GM12878 (cell line): ENCODE measurements at regions of chr3 and their contacts with region 1.

Region 1: DNA sequence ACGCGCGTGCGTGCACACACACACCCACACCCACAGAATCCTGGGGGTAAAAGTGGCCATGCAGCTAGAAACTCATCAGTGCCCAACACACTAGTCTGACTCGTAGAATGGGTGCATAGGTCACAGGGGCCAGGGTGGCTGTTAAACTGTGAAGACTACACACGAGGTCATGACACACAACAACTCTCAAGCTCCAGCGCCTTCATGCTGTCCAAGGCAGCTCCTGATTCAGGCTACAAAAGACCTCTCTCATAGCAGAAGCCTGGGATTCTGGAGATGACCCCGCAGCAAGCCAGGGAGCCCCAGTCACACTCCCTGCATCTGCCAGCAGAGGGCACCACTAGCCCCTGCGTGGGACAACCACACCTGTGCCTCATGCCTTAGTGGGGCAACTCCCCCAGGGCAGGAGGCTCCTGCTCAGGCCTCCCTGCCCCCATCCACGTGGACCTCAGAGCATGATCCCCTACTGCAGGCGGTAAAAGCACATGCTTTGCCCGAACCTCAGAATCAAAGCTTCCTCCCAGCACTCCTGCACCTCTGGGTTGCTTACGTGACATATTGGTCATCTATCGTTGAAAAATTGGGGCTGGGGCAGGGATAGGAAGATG is 93.1 kb downstream of the LRIG1 start:
- DNase-seq: no peak
- ATAC-seq: peak; percentile 98
- H3K4me3 ChIP-seq: no peak overlapping the region
- H3K27ac ChIP-seq: no peak overlapping the region
- H3K4me1 ChIP-seq: no peaks in the 10 kb centered on the region
- H3K27me3 ChIP-seq: no peaks in the 10 kb centered on the region
- CTCF ChIP-seq: peak; percentile 85 to 96 (median 93)
- EP300 ChIP-seq: no peak
- POLR2A ChIP-seq: no peak
- RAD21 ChIP-seq: peak; percentile 94

Region 2: DNA sequence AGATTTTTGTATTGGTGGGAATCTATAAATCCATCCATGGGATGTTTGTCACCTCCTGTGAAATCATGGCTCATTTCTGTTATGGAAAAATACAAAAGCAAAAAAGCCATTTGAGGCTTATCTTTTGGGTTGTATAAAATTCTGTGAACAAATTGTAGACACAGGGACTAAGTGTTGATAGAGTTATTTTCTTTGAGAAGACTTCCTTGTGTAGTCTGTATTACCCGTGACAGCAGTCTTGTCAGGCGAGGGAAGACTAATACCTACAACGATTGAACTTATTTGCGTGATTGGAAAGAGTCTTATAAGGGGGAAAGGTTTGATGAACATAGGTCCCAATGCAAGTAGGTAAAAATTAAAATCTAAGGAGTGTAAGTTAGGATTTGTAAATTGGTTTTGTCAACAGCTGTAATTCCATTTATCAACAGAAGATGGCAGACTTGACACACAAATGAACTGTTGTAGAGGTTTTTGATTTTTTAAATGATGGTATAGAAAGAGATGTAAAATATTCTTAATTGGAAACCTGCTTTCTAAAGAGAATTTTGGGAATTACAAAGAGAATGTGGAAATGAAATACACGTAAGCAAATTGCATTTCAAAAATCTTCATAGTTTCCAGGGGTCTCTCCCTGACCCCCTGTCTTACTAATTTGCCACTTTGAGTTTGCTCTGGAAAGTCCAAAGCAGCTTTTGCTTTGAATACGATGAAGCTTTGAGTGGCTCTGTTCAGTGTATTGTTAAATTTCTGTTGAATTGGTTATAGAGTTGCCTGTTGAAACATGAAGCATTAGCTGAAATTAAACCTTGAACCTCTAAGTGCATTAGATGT is 153.7 kb before region 1 on chr3:
- CTCF ChIA-PET with region 1: interaction called, 30 read pairs
- POLR2A ChIA-PET with region 1: no interaction called
- RAD21 ChIA-PET with region 1: interaction called, 4 read pairs
- SMC1A ChIA-PET with region 1: interaction called, 12 read pairs
- in situ Hi-C with region 1: no loop called
- intact Hi-C with region 1: no loop called
- DNase-seq: no peak
- ATAC-seq: peak; percentile 62
- H3K4me3 ChIP-seq: no peak overlapping the region
- H3K27ac ChIP-seq: no peak overlapping the region
- H3K4me1 ChIP-seq: no peaks in the 10 kb centered on the region
- H3K27me3 ChIP-seq: no peaks in the 10 kb centered on the region
- CTCF ChIP-seq: peak; percentile 44 to 62 (median 55); a peak in 4 of 6 replicates
- EP300 ChIP-seq: no peak
- POLR2A ChIP-seq: no peak
- RAD21 ChIP-seq: peak; percentile 66

Region 3: GRCh38 chr3:66378256-66378823 is 29.4 kb before region 1 on chr3:
- CTCF ChIA-PET with region 1: interaction called, 14 read pairs
- POLR2A ChIA-PET with region 1: no interaction called
- RAD21 ChIA-PET with region 1: interaction called, 3 read pairs
- SMC1A ChIA-PET with region 1: interaction called, 5 read pairs
- in situ Hi-C with region 1: no loop called
- intact Hi-C with region 1: no loop called
- DNase-seq: no peak
- ATAC-seq: peak; percentile 61
- H3K4me3 ChIP-seq: no peak overlapping the region
- H3K27ac ChIP-seq: no peak overlapping the region
- H3K4me1 ChIP-seq: no peaks in the 10 kb centered on the region
- H3K27me3 ChIP-seq: no peaks in the 10 kb centered on the region
- CTCF ChIP-seq: peak; percentile 40 to 67 (median 63)
- EP300 ChIP-seq: no peak
- POLR2A ChIP-seq: no peak
- RAD21 ChIP-seq: peak; percentile 40

Region 4: GRCh38 chr3:66490214-66490613 is 82.5 kb after region 1 on chr3:
- CTCF ChIA-PET with region 1: interaction called, 10 read pairs
- POLR2A ChIA-PET with region 1: no interaction called
- RAD21 ChIA-PET with region 1: no interaction called
- SMC1A ChIA-PET with region 1: no interaction called
- in situ Hi-C with region 1: no loop called
- intact Hi-C with region 1: no loop called
- DNase-seq: no peak
- ATAC-seq: peak; percentile 37
- H3K4me3 ChIP-seq: no peak overlapping the region
- H3K27ac ChIP-seq: no peak overlapping the region
- H3K4me1 ChIP-seq: peaks cover 19% of the 10 kb centered on the region
- H3K27me3 ChIP-seq: no peaks in the 10 kb centered on the region
- CTCF ChIP-seq: no peak
- EP300 ChIP-seq: no peak
- POLR2A ChIP-seq: no peak
- RAD21 ChIP-seq: no peak

Region 5: DNA sequence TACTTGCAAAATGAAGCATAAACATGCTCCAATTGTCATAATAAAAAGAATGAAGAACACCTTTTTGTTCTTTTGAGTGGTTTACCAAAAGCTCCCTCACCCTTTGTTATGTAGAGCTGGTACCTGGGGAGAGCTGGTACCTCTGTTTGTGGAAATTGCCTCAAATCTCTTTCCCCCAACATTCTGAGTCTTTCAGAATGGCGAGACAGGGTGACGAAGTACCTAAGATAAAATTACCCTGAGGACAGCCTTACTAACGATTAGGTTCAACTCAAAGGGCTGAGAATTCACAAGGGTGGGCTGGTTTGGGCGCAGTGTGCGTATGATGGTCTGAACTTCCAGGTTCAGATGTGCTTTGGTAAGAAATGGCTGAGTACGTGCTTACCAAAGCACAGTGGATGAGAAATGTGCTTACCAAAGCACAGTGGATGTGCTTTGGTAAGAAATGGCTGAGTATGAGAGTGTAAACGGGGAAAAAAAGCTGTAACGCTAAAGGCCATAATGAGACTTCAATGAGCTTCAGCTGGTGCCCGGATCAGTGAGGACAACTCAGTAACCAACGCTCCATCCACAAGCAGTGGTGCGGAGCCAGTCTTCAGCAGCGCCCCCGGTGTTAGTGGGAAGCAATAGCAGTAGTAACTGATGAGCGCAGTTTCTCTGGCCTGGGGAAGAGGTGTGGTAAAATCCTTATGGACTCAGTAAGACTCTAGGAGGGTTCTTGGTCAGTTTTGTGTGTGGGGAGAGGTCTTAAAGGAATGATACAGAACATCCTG is 165.4 kb after region 1 on chr3:
- CTCF ChIA-PET with region 1: no interaction called
- POLR2A ChIA-PET with region 1: no interaction called
- RAD21 ChIA-PET with region 1: no interaction called
- SMC1A ChIA-PET with region 1: no interaction called
- in situ Hi-C with region 1: no loop called
- intact Hi-C with region 1: no loop called
- DNase-seq: no peak
- ATAC-seq: peak; percentile 57; the same call in 2 of the 3 replicates
- H3K4me3 ChIP-seq: no peak overlapping the region
- H3K27ac ChIP-seq: no peak overlapping the region
- H3K4me1 ChIP-seq: no peaks in the 10 kb centered on the region
- H3K27me3 ChIP-seq: peaks cover 0 to 3% of the 10 kb centered on the region in 2 experiments; a peak in 2 of 4 replicates
- CTCF ChIP-seq: peak; percentile 15 to 60 (median 40); a peak in 4 of 6 replicates
- EP300 ChIP-seq: no peak
- POLR2A ChIP-seq: no peak
- RAD21 ChIP-seq: 0 out of 2 replicates have a peak, but pooled peaks have one; percentile 21

Region 6: GRCh38 chr3:66816090-66816761 is 408.5 kb after region 1 on chr3:
- CTCF ChIA-PET with region 1: interaction called, 149 read pairs
- POLR2A ChIA-PET with region 1: no interaction called
- RAD21 ChIA-PET with region 1: interaction called, 23 read pairs
- SMC1A ChIA-PET with region 1: interaction called, 11 read pairs
- in situ Hi-C with region 1: loop called (anchors 5 kb)
- intact Hi-C with region 1: loop called (anchors 1 kb)
- DNase-seq: no peak
- ATAC-seq: peak; percentile 91
- H3K4me3 ChIP-seq: no peak overlapping the region
- H3K27ac ChIP-seq: no peak overlapping the region
- H3K4me1 ChIP-seq: no peaks in the 10 kb centered on the region
- H3K27me3 ChIP-seq: no peaks in the 10 kb centered on the region
- CTCF ChIP-seq: peak; percentile 22 to 62 (median 43); a peak in 5 of 6 replicates
- EP300 ChIP-seq: no peak
- POLR2A ChIP-seq: no peak
- RAD21 ChIP-seq: peak; percentile 79